CD8-positive, alpha-beta T cell (primary cell): ENCODE measurements at regions of chr2 and their contacts with region 1.

Region 1: DNA sequence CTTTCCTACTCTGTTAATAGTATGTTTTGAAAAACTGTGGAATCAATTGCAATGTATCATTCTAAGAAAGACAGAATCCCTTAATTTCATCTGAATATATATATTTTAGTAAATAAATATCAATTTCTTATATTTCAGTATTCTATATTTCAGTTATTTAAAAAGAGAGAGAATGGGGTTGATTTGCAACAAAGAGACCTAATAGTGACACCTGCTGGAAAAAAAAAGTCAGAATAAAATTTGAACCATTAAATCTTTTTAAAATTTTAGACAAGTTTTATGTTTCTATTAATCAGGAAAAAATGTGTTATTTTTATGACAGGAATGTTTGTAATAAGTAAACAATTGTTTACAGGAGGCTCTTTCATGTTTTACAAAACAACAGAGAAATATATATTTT is 20.7 kb upstream of the CCNT2 start:
- DNase-seq: peak in 2 of 9 experiments; percentile 9 to 29
- ATAC-seq: no peak
- H3K4me3 ChIP-seq: no peak overlapping the region
- H3K4me3 Mint-ChIP-seq: no peak overlapping the region
- H3K27ac ChIP-seq: no peak overlapping the region
- H3K27ac Mint-ChIP-seq: no peak overlapping the region
- H3K4me1 ChIP-seq: no peaks in the 10 kb centered on the region
- H3K4me1 Mint-ChIP-seq: no peaks in the 10 kb centered on the region
- H3K27me3 ChIP-seq: no peaks in the 10 kb centered on the region
- H3K27me3 Mint-ChIP-seq: no peaks in the 10 kb centered on the region
- CTCF ChIP-seq: peak; percentile 67

Region 2: DNA sequence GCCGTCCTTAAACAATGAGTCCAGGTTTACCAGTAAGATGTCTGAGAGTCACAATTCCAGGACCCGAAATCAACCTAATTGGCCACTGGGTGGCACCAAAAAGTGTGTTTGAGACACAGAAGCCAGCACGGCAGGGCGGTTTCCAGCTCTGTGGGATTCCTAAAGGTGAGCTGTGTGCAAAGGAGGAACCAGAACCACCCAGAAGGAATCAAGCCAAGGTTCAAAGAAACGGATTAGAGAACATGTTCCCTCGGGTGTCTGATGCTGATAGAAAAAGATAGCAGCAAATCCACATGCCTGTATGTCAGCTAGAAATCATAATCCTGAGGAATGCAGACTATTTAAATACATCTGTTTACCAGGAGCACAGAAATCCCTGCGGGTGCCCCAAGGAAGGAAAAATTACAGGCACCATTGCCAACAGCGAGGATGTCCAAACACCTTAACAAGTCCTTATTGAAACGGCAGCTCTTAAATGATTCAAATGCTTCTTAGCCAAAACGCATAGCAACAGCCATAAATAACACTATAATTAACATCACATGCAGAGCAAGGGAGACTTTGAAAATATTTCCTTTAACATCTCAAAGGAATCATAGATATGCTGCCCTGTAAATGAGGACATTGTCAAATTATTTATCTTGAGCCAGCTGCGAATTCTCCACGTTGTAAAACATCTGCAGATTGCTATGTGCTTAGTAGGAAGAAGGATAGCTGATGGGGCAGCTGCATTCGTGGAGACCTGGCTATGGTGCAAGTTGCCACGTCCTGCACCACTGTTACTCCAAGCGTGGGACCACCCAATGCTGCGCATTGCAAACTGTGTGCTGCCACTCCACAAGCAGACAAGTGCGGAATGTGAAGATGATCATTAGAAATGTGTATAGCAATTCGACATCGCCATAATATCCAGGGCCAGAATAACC is 1010.9 kb before region 1 on chr2:
- CTCF ChIA-PET with region 1: no interaction called
- POLR2A ChIA-PET with region 1: no interaction called
- intact Hi-C with region 1: loop called (anchors 5 to 10 kb)
- DNase-seq: peak; percentile 4 to 61 (median 48)
- ATAC-seq: no peak
- H3K4me3 ChIP-seq: no peak overlapping the region
- H3K4me3 Mint-ChIP-seq: no peak overlapping the region
- H3K27ac ChIP-seq: no peak overlapping the region
- H3K27ac Mint-ChIP-seq: no peak overlapping the region
- H3K4me1 ChIP-seq: no peaks in the 10 kb centered on the region
- H3K4me1 Mint-ChIP-seq: peaks cover 2% of the 10 kb centered on the region
- H3K27me3 ChIP-seq: no peaks in the 10 kb centered on the region
- H3K27me3 Mint-ChIP-seq: peaks cover 4% of the 10 kb centered on the region
- CTCF ChIP-seq: peak; percentile 46

Region 3: DNA sequence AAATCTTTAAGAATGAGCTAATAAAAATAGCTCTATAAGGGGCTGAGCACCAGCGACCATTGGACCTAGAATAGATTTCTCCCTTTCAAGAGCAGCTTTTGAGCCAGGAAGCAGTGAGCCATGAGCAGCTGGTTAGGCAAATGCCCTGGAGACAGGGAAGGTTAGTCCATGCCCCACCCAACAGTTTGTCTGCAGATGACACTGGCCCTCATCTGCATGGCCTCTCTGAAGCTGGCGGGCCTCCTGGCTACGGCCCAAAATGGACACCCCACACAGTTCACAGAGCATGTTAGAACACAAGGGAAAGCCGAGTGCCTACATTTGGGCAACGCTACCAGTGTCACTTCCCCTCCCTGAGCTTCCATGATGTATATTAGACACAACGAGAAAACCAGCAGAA is 443.0 kb before region 1 on chr2:
- CTCF ChIA-PET with region 1: interaction called, 9 read pairs
- POLR2A ChIA-PET with region 1: no interaction called
- intact Hi-C with region 1: loop called (anchors 1 kb)
- DNase-seq: no peak
- ATAC-seq: no peak
- H3K4me3 ChIP-seq: no peak overlapping the region
- H3K4me3 Mint-ChIP-seq: no peak overlapping the region
- H3K27ac ChIP-seq: no peak overlapping the region
- H3K27ac Mint-ChIP-seq: no peak overlapping the region
- H3K4me1 ChIP-seq: no peaks in the 10 kb centered on the region
- H3K4me1 Mint-ChIP-seq: no peaks in the 10 kb centered on the region
- H3K27me3 ChIP-seq: no peaks in the 10 kb centered on the region
- H3K27me3 Mint-ChIP-seq: no peaks in the 10 kb centered on the region
- CTCF ChIP-seq: no peak

Region 4: GRCh38 chr2:134460583-134460998 is 437.3 kb before region 1 on chr2:
- CTCF ChIA-PET with region 1: interaction called, 9 read pairs
- POLR2A ChIA-PET with region 1: no interaction called
- intact Hi-C with region 1: loop called (anchors 1 to 2 kb)
- DNase-seq: peak in 7 of 9 experiments; percentile 16 to 58 (median 47)
- ATAC-seq: peak; percentile 48
- H3K4me3 ChIP-seq: no peak overlapping the region
- H3K4me3 Mint-ChIP-seq: no peak overlapping the region
- H3K27ac ChIP-seq: no peak overlapping the region
- H3K27ac Mint-ChIP-seq: no peak overlapping the region
- H3K4me1 ChIP-seq: no peaks in the 10 kb centered on the region
- H3K4me1 Mint-ChIP-seq: no peaks in the 10 kb centered on the region
- H3K27me3 ChIP-seq: no peaks in the 10 kb centered on the region
- H3K27me3 Mint-ChIP-seq: no peaks in the 10 kb centered on the region
- CTCF ChIP-seq: no peak

Region 5: GRCh38 chr2:134574611-134575330 is 323.2 kb before region 1 on chr2:
- CTCF ChIA-PET with region 1: interaction called, 4 read pairs
- POLR2A ChIA-PET with region 1: no interaction called
- intact Hi-C with region 1: loop called (anchors 1 kb)
- DNase-seq: no peak
- ATAC-seq: no peak
- H3K4me3 ChIP-seq: no peak overlapping the region
- H3K4me3 Mint-ChIP-seq: no peak overlapping the region
- H3K27ac ChIP-seq: no peak overlapping the region
- H3K27ac Mint-ChIP-seq: no peak overlapping the region
- H3K4me1 ChIP-seq: no peaks in the 10 kb centered on the region
- H3K4me1 Mint-ChIP-seq: no peaks in the 10 kb centered on the region
- H3K27me3 ChIP-seq: no peaks in the 10 kb centered on the region
- H3K27me3 Mint-ChIP-seq: peaks cover 4% of the 10 kb centered on the region
- CTCF ChIP-seq: no peak

Region 6: DNA sequence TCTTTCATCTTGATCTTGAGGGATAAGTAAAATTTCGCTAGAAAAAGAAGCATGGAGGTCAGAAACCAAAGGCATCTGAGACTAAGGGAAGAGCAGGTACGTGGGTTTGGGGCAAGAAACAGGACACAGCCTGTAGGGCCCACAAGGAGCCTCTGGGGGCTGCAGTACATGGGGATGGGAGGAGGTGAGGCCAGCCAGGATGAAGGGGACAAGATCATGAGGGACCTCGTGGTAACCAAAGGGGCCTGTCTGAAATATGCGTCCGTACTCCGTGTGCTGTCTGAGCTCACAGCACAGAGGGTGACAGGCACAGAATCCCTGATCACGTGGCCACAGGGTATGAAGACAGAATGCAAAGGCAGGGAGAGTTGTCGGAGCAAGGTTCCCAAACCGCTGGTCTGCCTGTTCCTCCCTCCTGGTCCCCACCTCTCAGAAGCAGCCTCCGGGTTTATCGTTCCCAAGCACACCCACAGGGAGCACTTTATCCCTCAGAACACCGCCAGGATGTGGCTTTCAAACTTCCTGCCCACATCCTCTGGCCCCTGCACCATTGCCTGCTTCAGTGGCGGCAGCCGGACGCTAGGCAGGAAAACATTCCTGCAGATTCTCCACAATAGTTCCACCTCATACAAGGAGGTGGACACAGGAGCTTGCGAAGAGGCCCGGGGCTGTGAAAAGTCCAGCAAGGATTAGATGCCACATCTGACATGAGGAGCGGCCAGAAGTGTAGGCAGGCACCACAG is 191.2 kb before region 1 on chr2:
- CTCF ChIA-PET with region 1: no interaction called
- POLR2A ChIA-PET with region 1: no interaction called
- intact Hi-C with region 1: no loop called
- DNase-seq: peak in 2 of 9 experiments; percentile 11 to 15
- ATAC-seq: peak; percentile 36
- H3K4me3 ChIP-seq: peak overlapping the region in 1 of 2 experiments; percentile 5
- H3K4me3 Mint-ChIP-seq: peak overlapping the region; percentile 1
- H3K27ac ChIP-seq: no peak overlapping the region
- H3K27ac Mint-ChIP-seq: no peak overlapping the region
- H3K4me1 ChIP-seq: peaks cover 10% of the 10 kb centered on the region
- H3K4me1 Mint-ChIP-seq: peaks cover 25% of the 10 kb centered on the region
- H3K27me3 ChIP-seq: peaks cover 0 to 5% of the 10 kb centered on the region in 2 experiments
- H3K27me3 Mint-ChIP-seq: peaks cover 48% of the 10 kb centered on the region
- CTCF ChIP-seq: no peak

Region 7: DNA sequence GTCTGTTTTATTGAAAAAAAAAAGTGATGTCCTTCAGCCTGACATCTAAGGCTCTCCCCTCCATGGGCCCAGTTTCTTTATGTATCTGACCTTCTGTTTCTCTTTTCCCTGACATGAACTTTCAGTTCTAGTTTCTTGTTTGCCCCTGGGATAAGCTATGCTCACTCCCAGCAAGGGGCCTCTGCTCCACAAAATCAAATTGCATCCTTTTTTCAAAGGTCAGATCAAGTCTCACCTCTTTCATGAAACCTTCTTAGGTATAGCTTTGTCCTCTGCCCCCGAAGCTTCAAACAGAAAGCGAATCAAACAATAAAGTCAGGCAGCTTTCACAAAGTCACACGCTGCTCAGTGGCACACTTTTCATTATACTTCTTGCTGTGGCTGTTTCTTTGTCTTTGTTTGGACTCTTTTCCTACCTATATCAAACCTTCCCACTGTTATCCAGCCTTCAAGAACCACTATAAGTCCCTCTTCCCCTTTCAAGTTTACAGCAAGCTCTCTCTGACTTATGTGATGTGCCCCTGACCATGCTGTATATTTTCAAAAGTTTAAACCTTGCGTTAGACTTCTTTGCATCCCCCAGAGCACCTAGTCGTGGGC is 126.1 kb after region 1 on chr2:
- CTCF ChIA-PET with region 1: no interaction called
- POLR2A ChIA-PET with region 1: no interaction called
- intact Hi-C with region 1: no loop called
- DNase-seq: no peak
- ATAC-seq: no peak
- H3K4me3 ChIP-seq: no peak overlapping the region
- H3K4me3 Mint-ChIP-seq: no peak overlapping the region
- H3K27ac ChIP-seq: no peak overlapping the region
- H3K27ac Mint-ChIP-seq: no peak overlapping the region
- H3K4me1 ChIP-seq: no peaks in the 10 kb centered on the region
- H3K4me1 Mint-ChIP-seq: no peaks in the 10 kb centered on the region
- H3K27me3 ChIP-seq: no peaks in the 10 kb centered on the region
- H3K27me3 Mint-ChIP-seq: no peaks in the 10 kb centered on the region
- CTCF ChIP-seq: no peak